ENCODE measurements at regions of chr3 and their contacts with region 1.

Region 1: DNA sequence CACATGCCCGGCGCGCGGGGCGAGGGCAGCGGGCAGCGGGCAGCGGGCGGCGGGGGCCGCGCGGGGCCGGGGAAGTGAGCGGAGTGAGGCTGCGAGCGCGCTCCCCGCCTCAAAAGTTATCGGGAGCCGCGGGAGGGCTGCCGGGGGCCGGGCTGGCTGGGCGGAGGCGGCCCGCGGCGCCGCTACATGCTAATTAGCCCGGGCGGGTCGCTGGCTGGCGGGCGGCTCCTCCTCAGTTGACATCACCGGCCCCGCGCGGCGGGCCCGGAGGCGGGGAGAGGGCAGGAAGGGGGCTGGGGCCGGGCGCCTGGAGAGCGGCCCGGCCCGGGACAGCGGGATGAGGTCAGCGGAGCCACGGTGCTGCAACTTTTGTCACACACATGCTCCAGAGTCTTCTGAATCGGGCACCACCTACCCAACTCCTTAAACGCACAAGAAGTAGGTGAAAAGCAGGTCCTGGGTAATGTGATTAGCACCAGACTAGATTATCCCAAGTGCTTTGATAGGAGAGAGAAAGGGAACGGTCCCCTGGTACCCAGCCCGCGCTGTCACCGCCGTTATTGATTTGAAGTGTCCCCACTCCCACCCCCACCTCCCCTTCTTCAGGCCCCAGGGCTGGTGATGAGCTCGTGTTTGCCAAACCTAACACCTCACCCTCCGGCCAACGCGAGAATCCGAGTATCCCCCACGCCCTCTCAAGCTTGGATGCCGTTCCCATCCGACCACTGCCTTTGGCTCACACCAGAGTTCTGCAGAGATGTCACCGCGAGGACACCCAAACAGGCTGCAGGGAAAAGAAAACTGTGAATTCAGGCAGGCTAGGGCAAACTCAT is at the start of gene HEG1:
- DNase-seq: peak; percentile 78
- H3K4me3 Mint-ChIP-seq: peak within 1 kb of the TSS; percentile 80
- H3K27ac Mint-ChIP-seq: peak within 1 kb of the TSS; percentile 11
- H3K4me1 Mint-ChIP-seq: peaks cover 44% of the 10 kb centered on the region
- H3K27me3 Mint-ChIP-seq: no peaks in the 10 kb centered on the region
- total RNA-seq, gene HEG1: 5.8 TPM

Region 2: GRCh38 chr3:124964387-124964786 is 91.7 kb before region 1 on chr3:
- CTCF ChIA-PET with region 1: no interaction called
- intact Hi-C with region 1: loop called (anchors 1 kb)
- DNase-seq: peak; percentile 26
- H3K4me3 Mint-ChIP-seq: no peak overlapping the region
- H3K27ac Mint-ChIP-seq: no peak overlapping the region
- H3K4me1 Mint-ChIP-seq: peaks cover 5% of the 10 kb centered on the region
- H3K27me3 Mint-ChIP-seq: no peaks in the 10 kb centered on the region

Region 3: DNA sequence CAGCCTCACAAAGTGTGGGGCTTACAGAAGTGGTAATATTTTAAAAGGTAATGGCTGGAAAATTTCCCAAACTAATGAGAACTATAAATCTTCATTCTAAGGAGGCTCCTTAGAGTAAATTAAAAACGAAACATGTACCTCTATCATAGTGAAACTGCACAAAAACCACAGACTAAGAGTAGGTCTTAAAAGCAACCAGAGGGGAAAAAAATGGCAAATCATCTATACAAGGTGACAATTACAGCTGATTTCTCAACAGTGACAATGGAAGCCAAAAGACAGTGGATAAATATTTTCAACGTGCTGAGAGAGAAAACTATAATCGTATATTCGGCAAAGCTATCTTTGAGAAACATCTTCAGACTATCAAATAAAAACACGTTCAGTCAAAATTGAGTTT is 20.9 kb before region 1 on chr3:
- CTCF ChIA-PET with region 1: no interaction called
- intact Hi-C with region 1: loop called (anchors 1 kb)
- DNase-seq: no peak
- H3K4me3 Mint-ChIP-seq: no peak overlapping the region
- H3K27ac Mint-ChIP-seq: no peak overlapping the region
- H3K4me1 Mint-ChIP-seq: peaks cover 27% of the 10 kb centered on the region
- H3K27me3 Mint-ChIP-seq: no peaks in the 10 kb centered on the region

Region 4: GRCh38 chr3:125141596-125142419 is 85.7 kb after region 1 on chr3:
- CTCF ChIA-PET with region 1: interaction called, 5 read pairs
- intact Hi-C with region 1: loop called (anchors 1 kb)
- DNase-seq: peak; percentile 84
- H3K4me3 Mint-ChIP-seq: peak overlapping the region; percentile 67
- H3K27ac Mint-ChIP-seq: peak overlapping the region; percentile 50
- H3K4me1 Mint-ChIP-seq: peaks cover 34% of the 10 kb centered on the region
- H3K27me3 Mint-ChIP-seq: peaks cover 22% of the 10 kb centered on the region

Region 5: GRCh38 chr3:125594581-125595011 is 538.5 kb after region 1 on chr3:
- CTCF ChIA-PET with region 1: no interaction called
- intact Hi-C with region 1: loop called (anchors 2 kb)
- DNase-seq: peak; percentile 14
- H3K4me3 Mint-ChIP-seq: peak overlapping the region; percentile 99
- H3K27ac Mint-ChIP-seq: peak overlapping the region; percentile 88
- H3K4me1 Mint-ChIP-seq: peaks cover 38% of the 10 kb centered on the region
- H3K27me3 Mint-ChIP-seq: no peaks in the 10 kb centered on the region